ENCODE measurements at regions of chr1 and their contacts with region 1.

Region 1: GRCh38 chr1:116485071-116485735 is 85.6 kb downstream of the CD58 start:
- DNase-seq: peak; percentile 88
- H3K4me3 ChIP-seq: no peak overlapping the region
- H3K27ac ChIP-seq: no peak overlapping the region
- H3K4me1 ChIP-seq: peaks cover 0 to 3% (median 0%) of the 10 kb centered on the region in 4 donors
- H3K27me3 ChIP-seq: no peaks in the 10 kb centered on the region
- CTCF ChIP-seq: peak; percentile 60 to 89 (median 78)
- EP300 ChIP-seq: no peak
- POLR2A ChIP-seq: no peak

Region 2: GRCh38 chr1:116139592-116140134 is 345.5 kb before region 1 on chr1:
- intact Hi-C with region 1: loop called (anchors 1 kb)
- DNase-seq: no peak
- H3K4me3 ChIP-seq: no peak overlapping the region
- H3K27ac ChIP-seq: no peak overlapping the region
- H3K4me1 ChIP-seq: peaks cover 0 to 7% (median 0%) of the 10 kb centered on the region in 4 donors
- H3K27me3 ChIP-seq: no peaks in the 10 kb centered on the region
- CTCF ChIP-seq: no peak
- EP300 ChIP-seq: no peak
- POLR2A ChIP-seq: no peak

Region 3: DNA sequence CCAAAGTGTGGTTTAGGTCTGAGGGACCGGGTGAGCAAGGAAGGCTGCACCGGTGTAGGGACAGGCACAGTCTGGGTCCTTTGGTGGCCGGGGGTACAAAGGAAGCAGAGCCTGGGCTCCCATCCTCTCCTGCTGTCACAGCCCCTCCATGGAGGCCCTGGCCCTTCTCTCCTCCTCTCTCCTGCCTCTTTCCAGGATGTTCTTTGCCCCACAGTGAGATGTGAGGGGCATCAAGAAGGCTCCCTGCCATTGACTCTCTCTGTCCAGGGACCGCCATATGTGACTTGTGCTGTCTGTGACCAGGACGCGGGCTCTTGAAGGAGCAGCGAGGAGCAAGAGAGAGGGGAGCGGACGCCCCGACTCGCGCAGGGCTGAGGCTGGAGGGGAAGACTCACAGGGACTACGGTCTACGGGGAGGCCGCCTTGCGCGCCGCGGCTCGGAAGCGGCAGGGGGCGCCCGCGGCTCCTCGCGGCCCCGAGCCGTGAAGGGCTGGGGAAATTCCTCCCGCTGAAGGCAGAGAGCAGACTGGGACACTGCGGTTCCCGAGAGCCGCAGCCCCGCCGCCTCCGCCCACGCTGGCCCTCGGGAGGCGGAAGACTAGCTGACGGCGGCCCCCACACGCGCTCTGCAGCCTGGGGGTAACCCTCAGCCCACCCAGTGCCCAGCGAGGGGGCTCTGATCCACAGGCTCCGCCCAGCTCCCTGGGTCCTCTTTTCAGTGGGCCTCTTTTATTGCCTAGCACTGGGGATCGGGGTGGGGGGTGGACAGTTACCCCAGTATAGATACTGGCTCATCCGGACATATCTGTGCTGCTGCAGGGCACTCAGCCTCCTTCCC is 333.2 kb before region 1 on chr1:
- intact Hi-C with region 1: loop called (anchors 1 kb)
- DNase-seq: peak; percentile 78
- H3K4me3 ChIP-seq: peak overlapping the region; percentile 23 to 55 (median 44)
- H3K27ac ChIP-seq: peak overlapping the region; percentile 1 to 65 (median 52)
- H3K4me1 ChIP-seq: peaks cover 0 to 12% (median 10%) of the 10 kb centered on the region in 4 donors
- H3K27me3 ChIP-seq: no peaks in the 10 kb centered on the region
- CTCF ChIP-seq: peak; percentile 67 to 92 (median 77)
- EP300 ChIP-seq: no peak
- POLR2A ChIP-seq: no peak

Region 4: DNA sequence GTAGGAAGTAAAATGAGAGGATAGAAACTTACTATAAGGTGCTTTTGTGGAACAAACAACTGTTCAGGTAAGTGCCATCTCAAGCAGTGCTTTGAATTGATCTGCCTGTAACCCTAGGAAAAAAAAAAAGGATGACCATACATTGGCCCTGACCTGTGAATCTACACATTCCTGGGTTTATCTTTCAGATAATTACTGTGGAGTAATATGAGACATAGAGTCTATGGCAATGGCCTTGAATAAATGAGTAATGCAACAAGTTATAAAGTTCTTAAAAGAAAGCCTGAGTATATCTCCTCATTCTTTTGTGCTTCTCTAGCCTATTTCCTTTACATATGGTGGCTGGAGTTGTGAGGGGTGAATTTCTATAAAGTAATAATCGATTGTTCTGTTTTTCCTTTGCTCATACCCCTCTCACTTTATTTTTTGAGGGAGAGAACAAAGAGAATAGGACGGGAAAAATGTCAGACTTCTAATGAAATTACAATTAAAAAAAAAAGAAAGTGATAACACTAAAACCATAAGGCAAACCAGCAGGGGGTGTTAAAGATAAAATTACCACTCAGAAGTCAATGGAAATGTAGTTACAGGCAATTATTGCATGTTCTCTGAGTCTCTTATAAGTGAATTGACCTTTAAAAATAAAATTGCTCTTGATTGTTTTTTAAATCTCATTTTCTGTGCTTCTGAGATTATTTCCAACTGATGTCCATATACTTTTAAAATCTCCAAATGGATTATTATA is 124.6 kb before region 1 on chr1:
- intact Hi-C with region 1: loop called (anchors 2 kb)
- DNase-seq: no peak
- H3K4me3 ChIP-seq: no peak overlapping the region
- H3K27ac ChIP-seq: no peak overlapping the region
- H3K4me1 ChIP-seq: peaks cover 0 to 8% (median 5%) of the 10 kb centered on the region in 4 donors
- H3K27me3 ChIP-seq: no peaks in the 10 kb centered on the region
- CTCF ChIP-seq: peak in 2 of 4 experiments; percentile 24 to 43
- EP300 ChIP-seq: no peak
- POLR2A ChIP-seq: no peak

Region 5: GRCh38 chr1:116380499-116381242 is 104.5 kb before region 1 on chr1:
- intact Hi-C with region 1: no loop called
- DNase-seq: no peak
- H3K4me3 ChIP-seq: no peak overlapping the region
- H3K27ac ChIP-seq: peak overlapping the region in 1 of 4 donors; percentile 53
- H3K4me1 ChIP-seq: peaks cover 0 to 64% (median 51%) of the 10 kb centered on the region in 4 donors
- H3K27me3 ChIP-seq: no peaks in the 10 kb centered on the region
- CTCF ChIP-seq: no peak
- EP300 ChIP-seq: no peak
- POLR2A ChIP-seq: no peak

Measured in sigmoid colon (tissue), 7 donors.